Activated CD4-positive, alpha-beta memory T cell treated with anti-CD3 and anti-CD28 coated beads, Interleukin-2, amount 10 ng/mL, durations not matched to agents 7 days and 5 days (primary cell): ENCODE measurements at regions of chr3 and their contacts with region 1.

Region 1: DNA sequence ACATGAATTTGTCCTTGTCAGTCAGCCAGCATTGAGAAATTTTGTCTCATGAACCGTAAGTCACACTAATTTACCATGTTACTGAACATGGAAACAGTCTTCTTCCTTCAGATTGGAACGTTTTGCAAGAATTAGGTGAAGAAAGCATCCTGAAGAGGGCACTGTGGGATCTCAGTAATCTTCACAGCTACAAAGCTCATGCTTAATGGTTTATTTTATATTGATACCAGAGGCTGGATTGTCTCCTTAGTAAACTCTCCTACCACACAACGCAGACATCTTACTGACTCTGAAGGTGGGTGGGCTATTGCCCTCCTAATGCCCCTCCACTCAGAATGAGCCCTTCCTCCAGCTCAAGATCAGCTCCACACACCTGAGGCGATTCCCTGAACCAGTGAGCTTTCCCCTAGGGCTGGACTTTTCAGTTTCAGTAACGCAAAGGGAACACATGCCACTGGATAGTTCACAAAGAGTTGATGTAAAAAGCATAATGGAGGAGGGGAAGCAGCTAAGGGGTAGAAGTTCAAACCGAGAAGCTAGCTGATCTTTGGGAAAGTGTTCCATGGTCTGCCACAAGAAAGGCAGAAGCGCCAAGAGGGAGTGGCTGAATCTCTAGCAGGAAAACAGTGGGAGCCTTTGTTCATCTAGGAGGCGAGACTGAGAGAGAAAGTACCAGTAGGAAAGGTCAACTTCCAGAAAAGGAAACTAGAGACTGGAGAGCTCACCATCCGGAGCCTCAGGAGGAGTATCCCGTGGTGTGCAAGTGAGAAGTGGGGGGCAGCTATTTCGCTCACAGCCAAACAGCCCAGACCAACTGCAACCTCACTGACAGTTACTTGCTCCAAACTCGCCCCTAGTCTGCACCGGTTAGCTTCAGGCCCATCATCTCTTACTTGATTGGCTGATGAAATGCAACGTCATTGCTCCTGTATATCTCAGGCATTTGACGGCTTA is at the start of gene SLC9C1:
- DNase-seq: peak; percentile 48
- H3K4me3 Mint-ChIP-seq: peak within 1 kb of the TSS; percentile 51
- H3K27ac Mint-ChIP-seq: no peak within 1 kb of the TSS
- H3K4me1 Mint-ChIP-seq: peaks cover 28% of the 10 kb centered on the region
- H3K27me3 Mint-ChIP-seq: no peaks in the 10 kb centered on the region
- total RNA-seq, gene SLC9C1: not detected

Region 2: DNA sequence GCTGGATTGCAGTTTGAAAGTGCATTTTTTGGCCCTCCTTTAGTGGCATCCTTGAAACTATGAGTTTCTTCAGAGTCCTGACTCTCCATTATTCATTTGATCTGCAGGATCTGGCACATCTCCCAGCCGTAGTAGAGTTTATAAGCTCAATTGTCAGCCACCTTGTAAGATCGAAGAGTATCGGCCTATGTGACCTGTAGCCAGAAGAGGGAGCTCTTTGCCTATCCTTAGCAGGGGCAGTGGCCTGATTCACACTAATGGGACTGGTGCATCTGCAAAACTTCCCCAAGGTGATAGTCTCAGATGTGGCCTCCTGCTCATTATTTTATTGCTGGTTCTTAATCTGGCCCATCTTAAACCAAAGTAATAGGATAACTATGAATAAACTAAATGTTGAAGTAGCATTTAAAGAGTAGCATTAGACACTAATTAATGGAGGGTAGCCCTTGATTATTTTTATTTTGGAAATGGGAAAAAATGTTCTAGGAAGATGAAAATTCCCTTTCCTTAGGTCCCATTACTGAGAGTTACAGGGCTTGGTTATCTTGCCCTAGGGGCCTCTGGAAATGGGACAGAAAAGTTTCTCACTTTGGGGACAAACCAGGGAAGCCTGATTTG is 181.8 kb before region 1 on chr3:
- CTCF ChIA-PET with region 1: interaction called, 42 read pairs
- POLR2A ChIA-PET with region 1: no interaction called
- DNase-seq: peak; percentile 69
- H3K4me3 Mint-ChIP-seq: no peak overlapping the region
- H3K27ac Mint-ChIP-seq: no peak overlapping the region
- H3K4me1 Mint-ChIP-seq: peaks cover 18% of the 10 kb centered on the region
- H3K27me3 Mint-ChIP-seq: no peaks in the 10 kb centered on the region

Region 3: DNA sequence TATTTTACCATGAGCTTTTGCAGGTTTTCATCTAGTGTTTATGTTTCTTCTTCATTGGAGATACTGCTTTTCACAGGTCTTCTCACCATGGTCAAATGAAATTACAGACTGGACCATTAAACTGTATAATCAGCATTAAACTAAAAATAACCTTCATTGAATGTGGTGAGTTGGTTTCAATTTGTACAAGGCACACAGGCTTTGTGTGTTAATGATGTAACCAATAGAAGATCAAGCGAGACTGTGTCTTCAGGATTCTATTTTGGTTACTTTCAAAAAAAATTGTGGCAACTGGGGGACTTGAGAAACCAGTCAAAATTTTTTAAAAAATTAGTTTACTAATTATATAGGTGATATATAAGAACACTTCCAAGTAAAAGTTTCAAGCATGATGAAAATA is 106.3 kb before region 1 on chr3:
- CTCF ChIA-PET with region 1: no interaction called
- POLR2A ChIA-PET with region 1: no interaction called
- DNase-seq: no peak
- H3K4me3 Mint-ChIP-seq: no peak overlapping the region
- H3K27ac Mint-ChIP-seq: no peak overlapping the region
- H3K4me1 Mint-ChIP-seq: peaks cover 5% of the 10 kb centered on the region
- H3K27me3 Mint-ChIP-seq: no peaks in the 10 kb centered on the region

Region 4: GRCh38 chr3:112233081-112233480 is 60.6 kb before region 1 on chr3:
- CTCF ChIA-PET with region 1: no interaction called
- POLR2A ChIA-PET with region 1: no interaction called
- DNase-seq: no peak
- H3K4me3 Mint-ChIP-seq: no peak overlapping the region
- H3K27ac Mint-ChIP-seq: no peak overlapping the region
- H3K4me1 Mint-ChIP-seq: peaks cover 2% of the 10 kb centered on the region
- H3K27me3 Mint-ChIP-seq: peaks cover 10% of the 10 kb centered on the region

Region 5: GRCh38 chr3:112303764-112304325 is 10.2 kb after region 1 on chr3:
- CTCF ChIA-PET with region 1: interaction called, 35 read pairs
- POLR2A ChIA-PET with region 1: interaction called, 5 read pairs
- DNase-seq: no peak
- H3K4me3 Mint-ChIP-seq: no peak overlapping the region
- H3K27ac Mint-ChIP-seq: no peak overlapping the region
- H3K4me1 Mint-ChIP-seq: peaks cover 3% of the 10 kb centered on the region
- H3K27me3 Mint-ChIP-seq: no peaks in the 10 kb centered on the region

Region 6: GRCh38 chr3:112333002-112333380 is 39.3 kb after region 1 on chr3 and contains the start of gene CD200:
- CTCF ChIA-PET with region 1: interaction called, 14 read pairs
- POLR2A ChIA-PET with region 1: no interaction called
- DNase-seq: peak; percentile 55
- H3K4me3 Mint-ChIP-seq: peak within 1 kb of the TSS; percentile 84
- H3K27ac Mint-ChIP-seq: peak within 1 kb of the TSS; percentile 67
- H3K4me1 Mint-ChIP-seq: peaks cover 44% of the 10 kb centered on the region
- H3K27me3 Mint-ChIP-seq: no peaks in the 10 kb centered on the region
- total RNA-seq, gene CD200: 9.1 to 9.2 TPM

Region 7: DNA sequence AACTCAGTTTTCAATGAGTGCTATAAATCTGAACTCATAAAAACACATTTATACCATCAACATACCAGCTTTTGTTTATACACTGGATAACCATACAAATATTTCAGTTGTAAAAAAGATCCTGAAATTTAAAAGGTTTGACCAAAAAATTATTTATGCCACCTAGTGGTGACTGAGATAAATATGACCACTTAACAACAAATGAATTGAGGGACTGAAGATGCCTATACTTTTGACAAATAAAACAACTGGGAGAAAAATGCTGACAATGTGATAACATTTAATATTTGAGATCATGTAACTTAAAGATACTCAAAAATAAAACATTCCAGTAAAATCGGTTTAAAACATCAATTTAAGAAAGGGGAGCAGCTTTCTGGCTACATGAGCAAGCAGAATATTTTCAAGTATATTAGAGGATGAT is 237.7 kb after region 1 on chr3:
- CTCF ChIA-PET with region 1: interaction called, 11 read pairs
- POLR2A ChIA-PET with region 1: no interaction called
- DNase-seq: no peak
- H3K4me3 Mint-ChIP-seq: no peak overlapping the region
- H3K27ac Mint-ChIP-seq: no peak overlapping the region
- H3K4me1 Mint-ChIP-seq: peaks cover under 1% of the 10 kb centered on the region
- H3K27me3 Mint-ChIP-seq: no peaks in the 10 kb centered on the region